ENCODE measurements at regions of chr1 and their contacts with region 1.

Region 1: GRCh38 chr1:119808972-119809550 is 2.2 kb downstream of the REG4 start:
- DNase-seq: no peak
- H3K4me3 ChIP-seq: no peak overlapping the region
- CTCF ChIP-seq: peak; percentile 92

Region 2: GRCh38 chr1:119564548-119564947 is 244.5 kb before region 1 on chr1:
- CTCF ChIA-PET with region 1: no interaction called
- POLR2A ChIA-PET with region 1: no interaction called
- DNase-seq: no peak
- H3K4me3 ChIP-seq: no peak overlapping the region
- CTCF ChIP-seq: no peak

Region 3: DNA sequence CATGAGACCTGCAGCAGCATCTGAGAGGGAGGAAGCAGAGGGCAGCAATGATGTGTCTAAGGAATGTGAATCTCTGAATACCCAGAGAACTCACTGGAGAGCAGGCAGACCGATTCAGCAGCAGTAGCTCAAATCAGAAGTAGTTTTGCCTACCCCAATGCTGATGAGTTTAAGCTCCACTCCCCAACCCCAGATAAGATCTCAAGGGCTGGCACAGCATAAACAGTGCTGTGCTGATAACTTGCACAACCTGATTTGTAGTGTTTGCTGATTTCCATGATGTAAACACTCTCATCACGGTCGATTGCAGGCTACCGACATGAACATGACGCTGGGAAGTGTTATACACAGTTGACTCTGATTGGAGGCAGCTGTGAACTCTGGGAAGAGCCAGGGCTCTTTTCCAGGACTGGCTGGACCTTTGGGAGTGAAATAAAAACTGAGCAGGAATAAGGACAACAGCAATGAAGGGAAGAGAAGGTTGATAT is 29.1 kb before region 1 on chr1:
- CTCF ChIA-PET with region 1: interaction called, 12 read pairs
- POLR2A ChIA-PET with region 1: no interaction called
- DNase-seq: no peak
- H3K4me3 ChIP-seq: peak overlapping the region; percentile 37
- CTCF ChIP-seq: no peak

Region 4: DNA sequence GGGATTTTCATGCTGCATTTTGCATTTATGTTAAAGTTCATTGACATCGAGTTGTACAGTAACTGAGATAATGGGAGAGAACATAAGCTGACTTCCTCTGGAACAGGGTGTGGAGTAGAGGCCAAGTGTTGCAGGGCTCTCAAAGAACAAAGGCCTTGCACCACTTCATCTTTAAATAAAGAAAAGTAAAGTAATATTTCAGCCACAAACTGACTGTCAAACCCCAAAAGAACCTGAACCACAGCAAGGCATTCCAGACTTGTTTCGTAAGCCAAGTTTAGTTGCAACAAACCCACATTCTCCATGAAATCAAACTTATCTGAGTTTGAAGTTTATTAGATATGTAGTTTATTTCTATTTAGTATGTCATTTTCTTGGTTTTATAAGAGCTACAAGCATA is 21.3 kb before region 1 on chr1:
- CTCF ChIA-PET with region 1: interaction called, 14 read pairs
- POLR2A ChIA-PET with region 1: no interaction called
- DNase-seq: no peak
- H3K4me3 ChIP-seq: no peak overlapping the region
- CTCF ChIP-seq: no peak

Region 5: DNA sequence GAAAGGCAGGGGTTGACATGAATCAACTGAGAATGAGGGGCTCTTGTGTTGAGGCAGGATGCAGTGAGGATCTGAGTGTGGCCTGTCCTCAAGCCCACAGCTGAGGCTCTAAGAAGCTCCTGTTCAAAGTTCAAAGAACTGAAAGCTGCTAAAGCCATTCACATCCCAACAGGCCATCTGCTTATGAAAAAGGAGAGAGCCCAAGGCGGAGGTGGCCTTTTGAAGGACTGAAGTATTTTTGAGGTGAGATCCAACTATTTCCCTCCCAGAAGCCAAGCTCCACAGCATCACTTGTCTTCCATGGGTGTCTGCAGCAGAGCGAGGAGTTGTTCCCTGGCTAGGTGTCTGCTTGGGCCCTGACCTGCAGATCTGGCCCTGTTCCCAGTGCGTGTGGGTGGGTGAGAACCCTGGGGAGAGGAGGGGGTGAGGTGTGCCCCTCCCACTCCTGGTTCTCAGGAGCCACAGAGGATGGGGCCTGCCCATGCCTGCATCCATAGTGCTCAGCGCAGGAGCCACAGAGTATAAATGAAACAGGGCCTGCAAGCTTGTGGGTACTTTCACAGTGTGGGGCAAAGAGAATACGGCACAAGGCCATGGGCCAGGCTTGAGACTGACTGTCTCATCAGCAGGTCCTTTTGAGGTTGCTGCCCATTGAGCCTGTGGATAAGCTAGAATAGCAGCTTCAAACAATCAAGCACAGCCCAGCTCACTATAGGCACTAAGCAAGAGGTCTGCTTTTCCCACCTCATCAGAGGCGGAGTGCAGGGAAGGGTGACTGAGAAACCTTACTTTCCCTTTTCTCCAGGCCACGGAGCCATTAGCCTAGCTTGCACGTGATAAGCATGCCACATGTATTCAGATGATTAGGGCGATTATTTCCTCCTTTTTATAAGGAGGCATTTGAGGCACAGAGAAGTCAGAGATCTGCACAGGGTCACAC is 13.5 kb before region 1 on chr1:
- CTCF ChIA-PET with region 1: interaction called, 59 read pairs
- POLR2A ChIA-PET with region 1: no interaction called
- DNase-seq: no peak
- H3K4me3 ChIP-seq: no peak overlapping the region
- CTCF ChIP-seq: no peak

Region 6: GRCh38 chr1:119827010-119827409 is 17.9 kb after region 1 on chr1:
- CTCF ChIA-PET with region 1: interaction called, 22 read pairs
- POLR2A ChIA-PET with region 1: no interaction called
- DNase-seq: no peak
- H3K4me3 ChIP-seq: no peak overlapping the region
- CTCF ChIP-seq: peak; percentile 6

Region 7: DNA sequence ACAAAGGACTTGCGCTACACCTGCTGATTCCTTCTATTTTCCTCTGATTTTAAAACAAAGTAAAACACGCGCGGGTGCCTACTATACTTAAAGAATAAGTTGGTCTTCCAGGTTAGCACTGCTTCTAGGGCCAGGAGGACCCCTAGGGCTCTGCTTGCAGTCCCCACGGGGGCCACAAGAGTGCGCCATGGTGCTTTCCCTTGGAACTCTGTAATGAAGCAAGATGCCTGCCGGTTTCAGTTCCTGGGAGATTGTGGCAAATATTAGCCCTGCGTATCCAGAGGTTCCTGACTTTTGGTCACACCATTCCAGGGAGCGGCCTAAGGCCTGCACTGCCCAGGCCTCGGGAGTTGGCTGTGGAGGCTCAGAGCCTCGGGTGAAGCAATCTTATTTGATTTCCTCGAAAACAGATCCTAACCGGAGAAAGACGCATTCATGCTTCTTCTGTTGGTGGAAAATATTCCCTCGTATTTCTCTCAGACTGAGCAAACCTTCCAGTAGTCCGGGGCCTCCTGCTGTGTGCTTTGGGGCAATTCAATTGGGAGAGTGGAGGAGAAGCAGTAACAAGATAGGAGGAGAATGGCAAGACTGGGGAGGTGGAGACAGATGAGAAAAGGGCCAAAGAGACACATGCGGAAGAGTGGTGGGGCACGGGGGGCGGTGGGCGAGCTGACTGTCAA is 62.0 kb after region 1 on chr1:
- CTCF ChIA-PET with region 1: interaction called, 14 read pairs
- POLR2A ChIA-PET with region 1: no interaction called
- DNase-seq: no peak
- H3K4me3 ChIP-seq: no peak overlapping the region
- CTCF ChIP-seq: peak; percentile 97

Measured in AG04449 (cell line).